ENCODE measurements at regions of chr10 and their contacts with region 1.

Region 1: GRCh38 chr10:99612167-99612831 is 7.9 kb downstream of the SLC25A28 start:
- DNase-seq: no peak

Region 2: DNA sequence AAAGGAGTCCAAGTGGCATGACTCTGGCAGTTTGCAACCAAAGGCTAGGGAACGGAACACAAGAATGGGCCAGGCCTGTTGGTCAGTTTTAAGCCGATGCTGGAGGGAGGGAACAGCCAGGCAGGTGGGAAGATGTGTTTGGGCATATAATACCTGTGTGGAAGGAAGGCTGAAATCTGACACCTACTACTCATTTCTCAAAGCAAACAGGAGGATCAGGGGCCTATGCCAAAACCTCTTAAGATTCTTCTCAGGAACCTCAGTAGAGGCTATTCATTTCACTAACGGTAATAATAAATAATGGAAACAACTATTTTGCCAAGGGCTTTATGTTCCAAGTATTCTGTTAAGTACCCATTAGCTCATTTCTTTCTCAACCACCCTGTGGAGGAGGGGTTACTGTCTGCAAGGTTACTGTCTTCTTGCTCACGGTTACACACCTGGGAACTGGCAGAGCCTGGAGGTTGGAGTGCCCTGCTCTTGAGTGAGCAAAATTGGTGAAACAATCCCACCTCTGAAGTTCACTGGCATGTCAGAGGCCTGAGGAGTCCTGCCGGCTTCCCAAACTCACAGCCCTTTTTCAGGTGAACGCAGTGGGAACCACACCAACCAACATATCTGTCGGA is 217.4 kb before region 1 on chr10:
- intact Hi-C with region 1: loop called (anchors 2 kb)
- DNase-seq: no peak

Region 3: DNA sequence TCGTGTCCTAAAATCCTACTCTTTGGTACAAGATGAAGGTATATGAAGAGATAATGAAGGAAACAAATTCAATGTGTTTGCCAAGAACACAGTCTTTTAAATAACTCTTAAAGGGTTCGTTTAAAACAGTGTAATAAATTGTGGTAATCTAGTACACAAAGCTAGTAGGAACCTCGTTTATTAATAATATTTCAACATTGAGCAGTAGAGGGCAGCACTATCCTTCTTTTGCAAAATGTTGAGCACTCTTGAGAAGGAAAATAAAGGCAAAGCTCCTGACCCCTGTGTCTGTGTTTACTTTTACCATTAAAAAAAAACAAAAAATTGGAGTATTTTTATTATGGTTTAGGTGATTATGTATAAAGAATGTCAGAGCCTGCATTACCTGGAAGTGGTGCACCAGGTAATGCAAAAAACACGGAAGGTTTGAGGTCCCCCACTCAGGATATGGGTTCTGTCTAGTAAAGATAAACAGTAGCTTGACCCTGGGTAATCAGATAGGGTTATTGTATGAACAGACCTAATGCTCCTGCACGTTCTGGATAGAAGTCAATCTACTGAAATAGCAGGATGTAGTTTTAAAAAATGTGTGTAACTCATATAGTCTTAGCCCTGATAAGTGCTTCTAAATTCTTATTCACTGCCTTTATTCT is 176.2 kb before region 1 on chr10:
- intact Hi-C with region 1: loop called (anchors 2 kb)
- DNase-seq: no peak

Region 4: DNA sequence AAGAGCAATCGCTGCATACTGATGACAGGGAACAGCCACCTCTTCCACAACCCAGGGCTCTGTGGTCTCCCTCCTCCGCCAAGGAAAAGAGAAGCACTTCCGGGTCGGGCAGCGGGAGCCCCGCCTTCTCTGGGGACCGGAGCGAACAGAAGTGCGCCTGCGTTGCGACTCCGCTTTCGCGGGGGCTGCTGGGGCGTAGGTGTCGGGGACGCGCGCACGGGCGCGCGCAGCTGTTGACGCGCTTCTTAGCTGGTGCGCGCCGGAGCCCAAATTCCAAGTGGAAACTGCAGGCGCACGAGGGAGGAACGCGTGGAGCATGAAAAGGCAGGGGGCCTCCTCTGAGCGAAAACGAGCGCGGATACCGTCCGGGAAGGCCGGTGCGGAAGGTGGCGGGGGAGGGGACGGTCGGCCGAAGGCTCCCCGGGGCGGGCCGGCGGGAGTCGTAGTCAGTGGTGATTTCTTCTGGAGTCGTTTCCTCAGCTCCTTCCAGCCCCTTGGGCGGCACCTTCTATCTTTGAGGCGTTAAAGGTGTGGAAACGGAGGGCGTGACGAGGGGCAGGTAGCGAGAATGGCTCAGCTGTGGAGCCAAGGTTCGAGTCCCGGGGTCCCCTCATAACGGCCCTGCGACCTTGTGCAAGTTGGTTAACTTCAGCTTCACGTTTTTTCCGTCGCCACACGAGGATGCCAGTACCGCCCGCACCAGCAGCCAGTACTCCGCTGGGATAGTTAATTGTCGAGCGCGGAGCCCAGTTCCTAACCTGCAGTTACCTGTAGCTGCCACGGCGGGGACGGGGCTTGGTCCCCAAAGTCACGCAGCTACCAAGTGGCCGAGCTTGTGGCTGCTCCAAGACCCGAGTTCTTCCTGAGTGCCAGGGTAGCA is 120.0 kb after region 1 on chr10 and contains the starts of genes COX15 and CUTC:
- intact Hi-C with region 1: no loop called
- DNase-seq: peak; percentile 99
- total RNA-seq, gene COX15: 35.6 TPM
- total RNA-seq, gene CUTC: 33.2 TPM

Measured in cardiac septum (tissue), 1 donor.